CD8-positive, alpha-beta T cell (primary cell): ENCODE measurements at regions of chr7 and their contacts with region 1.

Region 1: GRCh38 chr7:82572195-82572880 is 128.8 kb upstream of the CACNA2D1 start:
- DNase-seq: peak; percentile 19 to 81 (median 62)
- ATAC-seq: peak; percentile 48
- H3K4me3 ChIP-seq: no peak overlapping the region
- H3K4me3 Mint-ChIP-seq: no peak overlapping the region
- H3K27ac ChIP-seq: no peak overlapping the region
- H3K27ac Mint-ChIP-seq: no peak overlapping the region
- H3K4me1 ChIP-seq: no peaks in the 10 kb centered on the region
- H3K4me1 Mint-ChIP-seq: no peaks in the 10 kb centered on the region
- H3K27me3 ChIP-seq: no peaks in the 10 kb centered on the region
- H3K27me3 Mint-ChIP-seq: no peaks in the 10 kb centered on the region
- CTCF ChIP-seq: peak; percentile 87

Region 2: GRCh38 chr7:81482600-81483186 is 1089.6 kb before region 1 on chr7:
- CTCF ChIA-PET with region 1: interaction called, 3 read pairs
- POLR2A ChIA-PET with region 1: no interaction called
- intact Hi-C with region 1: loop called in 1 of 2 experiments (anchors 5 kb)
- DNase-seq: peak in 2 of 9 experiments; percentile 3 to 20
- ATAC-seq: no peak
- H3K4me3 ChIP-seq: no peak overlapping the region
- H3K4me3 Mint-ChIP-seq: no peak overlapping the region
- H3K27ac ChIP-seq: no peak overlapping the region
- H3K27ac Mint-ChIP-seq: no peak overlapping the region
- H3K4me1 ChIP-seq: no peaks in the 10 kb centered on the region
- H3K4me1 Mint-ChIP-seq: no peaks in the 10 kb centered on the region
- H3K27me3 ChIP-seq: no peaks in the 10 kb centered on the region
- H3K27me3 Mint-ChIP-seq: no peaks in the 10 kb centered on the region
- CTCF ChIP-seq: peak; percentile 68

Region 3: DNA sequence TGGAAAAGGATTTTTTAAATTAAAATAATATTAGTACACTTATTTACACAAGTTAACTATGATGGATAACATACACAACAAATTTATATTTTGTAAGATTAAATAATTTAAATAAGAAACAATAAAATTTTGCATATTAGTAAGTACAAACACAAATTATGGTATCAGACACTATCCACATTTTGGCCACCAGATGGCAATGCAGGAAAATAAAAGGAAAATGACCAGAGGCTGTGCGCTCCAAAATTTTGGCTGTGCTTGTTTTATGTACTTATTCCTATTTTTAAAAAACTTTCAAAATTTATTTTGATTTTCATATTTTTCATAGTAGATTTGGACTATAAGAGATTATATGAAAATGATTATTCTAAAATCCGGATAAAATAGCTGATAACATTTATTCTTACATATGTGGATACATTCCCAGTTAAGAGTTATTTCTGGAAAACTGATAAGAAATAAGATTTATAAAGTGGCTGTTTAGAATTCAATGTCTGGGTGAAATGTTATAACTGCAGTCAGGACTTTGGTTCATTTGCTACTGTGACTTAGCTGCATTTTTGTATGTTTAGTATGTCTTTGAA is 527.7 kb before region 1 on chr7:
- CTCF ChIA-PET with region 1: no interaction called
- POLR2A ChIA-PET with region 1: no interaction called
- intact Hi-C with region 1: loop called in 1 of 2 experiments (anchors 10 kb)
- DNase-seq: peak in 2 of 9 experiments; percentile 14 to 18
- ATAC-seq: no peak
- H3K4me3 ChIP-seq: no peak overlapping the region
- H3K4me3 Mint-ChIP-seq: no peak overlapping the region
- H3K27ac ChIP-seq: no peak overlapping the region
- H3K27ac Mint-ChIP-seq: no peak overlapping the region
- H3K4me1 ChIP-seq: no peaks in the 10 kb centered on the region
- H3K4me1 Mint-ChIP-seq: no peaks in the 10 kb centered on the region
- H3K27me3 ChIP-seq: no peaks in the 10 kb centered on the region
- H3K27me3 Mint-ChIP-seq: no peaks in the 10 kb centered on the region
- CTCF ChIP-seq: peak; percentile 31